ENCODE measurements at regions of chr14 and their contacts with region 1.

Region 1: DNA sequence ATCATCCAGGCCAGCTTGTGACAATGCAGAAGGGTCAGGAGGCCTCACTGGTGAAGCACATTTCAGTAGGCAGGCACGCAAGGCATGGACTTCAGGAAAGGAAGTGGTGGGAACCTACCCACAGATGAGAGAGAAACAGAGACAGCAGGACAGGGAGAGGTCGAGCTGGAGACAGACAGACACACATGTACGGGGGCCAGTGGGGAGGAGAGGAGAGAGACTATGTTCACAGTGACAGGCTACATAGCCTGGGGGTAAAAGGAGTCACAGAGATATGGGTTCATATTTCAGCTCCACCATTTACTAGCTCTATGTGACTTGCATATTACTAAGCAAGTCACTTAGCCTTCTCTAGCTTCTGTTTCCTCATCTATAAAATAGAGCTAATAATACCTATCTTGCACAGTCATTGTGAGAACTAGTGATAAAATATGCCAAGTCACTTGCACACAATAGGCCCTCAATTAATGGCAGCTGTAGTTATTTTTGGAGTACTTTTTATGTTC is 91.1 kb upstream of the FUT8 start:
- DNase-seq: peak; percentile 38
- H3K4me3 ChIP-seq: peak overlapping the region; percentile 11
- H3K27ac ChIP-seq: peak overlapping the region; percentile 96
- H3K4me1 ChIP-seq: peaks cover 89% of the 10 kb centered on the region
- CTCF ChIP-seq: no peak

Region 2: GRCh38 chr14:65336191-65336591 is 14.8 kb after region 1 on chr14:
- CTCF ChIA-PET with region 1: interaction called, 23 read pairs
- POLR2A ChIA-PET with region 1: interaction called, 141 read pairs
- intact Hi-C with region 1: no loop called
- DNase-seq: no peak
- H3K4me3 ChIP-seq: no peak overlapping the region
- H3K27ac ChIP-seq: no peak overlapping the region
- H3K4me1 ChIP-seq: peaks cover 61% of the 10 kb centered on the region
- CTCF ChIP-seq: no peak

Region 3: DNA sequence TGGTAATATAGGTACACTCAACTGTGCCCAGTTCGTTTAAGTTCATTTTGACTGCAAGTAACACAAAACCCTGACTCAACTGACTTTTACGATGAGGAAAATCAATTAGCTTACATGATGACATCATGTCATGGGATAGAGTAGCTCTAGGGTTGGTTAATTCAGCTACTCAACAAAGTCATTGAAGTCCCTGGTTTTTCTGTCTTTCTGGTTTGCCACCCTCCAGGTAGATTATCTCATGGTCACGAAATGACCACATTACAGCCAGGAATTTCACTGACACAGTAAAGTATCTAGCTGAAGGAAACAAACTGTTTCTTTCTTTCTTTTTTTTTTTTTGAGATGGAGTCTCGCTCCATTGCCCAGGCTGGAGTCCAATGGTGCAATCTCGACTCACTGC is 22.6 kb after region 1 on chr14:
- CTCF ChIA-PET with region 1: interaction called, 4 read pairs
- POLR2A ChIA-PET with region 1: interaction called, 153 read pairs
- intact Hi-C with region 1: no loop called
- DNase-seq: no peak
- H3K4me3 ChIP-seq: no peak overlapping the region
- H3K27ac ChIP-seq: no peak overlapping the region
- H3K4me1 ChIP-seq: peaks cover 30% of the 10 kb centered on the region
- CTCF ChIP-seq: no peak

Region 4: DNA sequence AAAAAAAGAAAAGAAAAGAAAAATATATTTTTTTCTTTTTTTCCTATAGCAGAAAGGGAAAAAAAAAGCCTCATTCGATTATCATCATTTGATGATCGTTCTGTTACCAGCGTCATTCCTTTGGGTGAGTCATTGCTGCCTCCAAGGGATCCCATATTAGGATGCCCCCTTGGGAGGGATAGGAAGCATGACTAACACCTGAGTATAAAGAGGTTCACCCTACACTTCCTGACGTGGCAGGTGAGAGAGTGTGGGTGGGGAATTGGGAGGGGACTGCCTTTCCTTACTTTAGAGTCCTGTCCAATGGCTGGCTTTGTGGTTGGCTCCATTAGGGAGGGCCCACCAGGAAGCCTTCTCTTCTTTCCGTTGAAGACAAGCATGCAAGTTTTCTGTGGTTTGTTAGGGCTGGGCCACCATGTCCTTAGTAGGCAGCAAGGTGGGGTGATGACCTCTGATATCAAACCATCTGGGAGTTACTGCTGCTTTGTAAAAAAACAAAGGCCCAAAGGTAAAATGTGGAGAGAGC is 35.0 kb after region 1 on chr14:
- CTCF ChIA-PET with region 1: interaction called, 4 read pairs
- POLR2A ChIA-PET with region 1: interaction called, 153 read pairs
- intact Hi-C with region 1: loop called (anchors 1 kb)
- DNase-seq: peak; percentile 54
- H3K4me3 ChIP-seq: peak overlapping the region; percentile 38
- H3K27ac ChIP-seq: peak overlapping the region; percentile 97
- H3K4me1 ChIP-seq: peaks cover 98% of the 10 kb centered on the region
- CTCF ChIP-seq: no peak

Region 5: GRCh38 chr14:65361920-65362319 is 40.5 kb after region 1 on chr14:
- CTCF ChIA-PET with region 1: no interaction called
- POLR2A ChIA-PET with region 1: interaction called, 12 read pairs
- intact Hi-C with region 1: no loop called
- DNase-seq: no peak
- H3K4me3 ChIP-seq: no peak overlapping the region
- H3K27ac ChIP-seq: no peak overlapping the region
- H3K4me1 ChIP-seq: peaks cover 54% of the 10 kb centered on the region
- CTCF ChIP-seq: no peak